CD14-positive monocyte (primary cell): ENCODE measurements at regions of chr3 and their contacts with region 1.

Region 1: DNA sequence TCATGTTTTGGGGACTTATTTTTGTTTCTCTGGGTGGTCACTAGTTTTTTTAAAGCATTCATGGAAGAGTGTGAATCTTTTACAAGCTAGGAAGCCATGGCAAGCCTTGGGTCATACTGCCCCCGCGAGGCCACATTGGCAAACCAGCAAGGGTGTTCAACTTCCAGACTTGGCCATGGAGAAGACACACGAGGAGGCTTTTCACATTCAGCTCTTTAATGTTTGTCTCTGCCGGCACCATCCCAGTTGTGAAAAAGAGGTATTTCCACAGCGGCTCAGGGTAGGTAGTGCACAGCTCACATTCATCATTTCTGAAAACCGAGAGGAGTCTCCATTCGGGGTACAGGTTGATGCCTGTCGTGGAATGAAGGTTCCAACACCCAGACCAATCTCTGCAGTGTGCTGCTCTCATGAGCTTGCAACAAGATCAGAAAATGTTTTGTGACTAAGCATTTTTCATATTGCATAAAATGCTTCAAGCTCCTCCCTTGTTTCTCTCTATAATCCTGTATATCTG is 7.7 kb downstream of the CCR5 start:
- DNase-seq: peak; percentile 52 to 72 (median 68)
- H3K4me3 ChIP-seq: no peak overlapping the region
- H3K4me3 Mint-ChIP-seq: no peak overlapping the region
- H3K27ac ChIP-seq: no peak overlapping the region
- H3K27ac Mint-ChIP-seq: peak overlapping the region in 2 of 7 donors; percentile 59 to 63
- H3K4me1 ChIP-seq: peaks cover 18 to 21% of the 10 kb centered on the region in 2 donors
- H3K4me1 Mint-ChIP-seq: peaks cover 25% of the 10 kb centered on the region
- H3K27me3 ChIP-seq: no peaks in the 10 kb centered on the region
- H3K27me3 Mint-ChIP-seq: peaks cover 1 to 6% (median 4%) of the 10 kb centered on the region in 3 donors
- CTCF ChIP-seq: peak; percentile 78

Region 2: GRCh38 chr3:45760878-45761711 is 617.4 kb before region 1 on chr3:
- intact Hi-C with region 1: loop called in 1 of 2 experiments (anchors 5 kb)
- DNase-seq: peak; percentile 14 to 39 (median 39)
- H3K4me3 ChIP-seq: no peak overlapping the region
- H3K4me3 Mint-ChIP-seq: no peak overlapping the region
- H3K27ac ChIP-seq: no peak overlapping the region
- H3K27ac Mint-ChIP-seq: no peak overlapping the region
- H3K4me1 ChIP-seq: no peaks in the 10 kb centered on the region
- H3K4me1 Mint-ChIP-seq: peaks cover 3% of the 10 kb centered on the region
- H3K27me3 ChIP-seq: no peaks in the 10 kb centered on the region
- H3K27me3 Mint-ChIP-seq: peaks cover 0 to 2% (median 1%) of the 10 kb centered on the region in 3 donors
- CTCF ChIP-seq: peak; percentile 66

Region 3: GRCh38 chr3:46442576-46443562 is 64.4 kb after region 1 on chr3:
- intact Hi-C with region 1: loop called in 1 of 2 experiments (anchors 5 kb)
- DNase-seq: peak; percentile 40 to 69 (median 60)
- H3K4me3 ChIP-seq: no peak overlapping the region
- H3K4me3 Mint-ChIP-seq: no peak overlapping the region
- H3K27ac ChIP-seq: no peak overlapping the region
- H3K27ac Mint-ChIP-seq: no peak overlapping the region
- H3K4me1 ChIP-seq: peaks cover 9 to 10% of the 10 kb centered on the region in 2 donors
- H3K4me1 Mint-ChIP-seq: peaks cover 25% of the 10 kb centered on the region
- H3K27me3 ChIP-seq: no peaks in the 10 kb centered on the region
- H3K27me3 Mint-ChIP-seq: peaks cover 0 to 2% (median under 1%) of the 10 kb centered on the region in 3 donors
- CTCF ChIP-seq: peak; percentile 88